ENCODE measurements at regions of chrX and their contacts with region 1.

Region 1: DNA sequence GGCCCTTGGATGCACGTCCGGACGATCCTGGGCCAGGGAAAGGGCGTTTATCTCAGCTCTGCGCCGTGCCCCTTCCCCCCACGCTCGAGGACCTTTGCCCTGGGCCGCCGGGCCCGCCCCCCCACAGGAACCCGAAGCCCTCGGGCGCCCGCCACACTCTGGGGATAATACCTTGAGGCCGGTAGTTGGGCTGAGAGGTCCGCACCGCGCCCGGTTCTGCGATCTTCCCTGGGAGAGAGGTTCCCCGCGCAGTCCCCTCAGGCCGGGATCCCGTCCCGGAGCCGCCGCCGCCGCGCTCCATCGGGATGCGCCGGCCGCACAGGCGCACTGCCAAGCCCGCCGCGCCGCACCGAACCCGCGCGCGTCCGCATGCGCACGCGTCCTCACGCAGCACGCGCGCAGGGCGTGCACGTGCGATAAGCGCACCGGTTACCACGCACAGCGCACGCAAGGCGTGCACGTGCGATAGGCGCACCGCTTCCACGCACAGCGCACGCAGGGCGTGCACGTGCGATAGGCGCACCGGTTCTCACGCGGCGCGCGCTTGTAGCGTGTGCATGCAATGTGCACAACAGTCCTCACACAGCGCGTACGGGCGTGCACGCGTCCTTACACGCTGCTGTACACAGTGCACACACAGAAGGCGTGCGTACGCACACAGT is at the start of gene MAP7D2:
- DNase-seq: no peak
- H3K4me3 ChIP-seq: peak within 1 kb of the TSS in 1 of 2 donors; percentile 29
- H3K27ac ChIP-seq: no peak within 1 kb of the TSS
- H3K4me1 ChIP-seq: peaks cover 0 to 14% (median 6%) of the 10 kb centered on the region in 4 donors
- H3K27me3 ChIP-seq: peaks cover 0 to 17% of the 10 kb centered on the region in 2 donors
- CTCF ChIP-seq: no peak

Region 2: GRCh38 chrX:19931146-19931545 is 185.6 kb before region 1 on chrX:
- intact Hi-C with region 1: loop called (anchors 10 kb)
- DNase-seq: no peak
- H3K4me3 ChIP-seq: no peak overlapping the region
- H3K27ac ChIP-seq: no peak overlapping the region
- H3K4me1 ChIP-seq: no peaks in the 10 kb centered on the region
- H3K27me3 ChIP-seq: no peaks in the 10 kb centered on the region
- CTCF ChIP-seq: no peak

Region 3: GRCh38 chrX:19987856-19988255 is 128.9 kb before region 1 on chrX:
- intact Hi-C with region 1: no loop called
- DNase-seq: no peak
- H3K4me3 ChIP-seq: no peak overlapping the region
- H3K27ac ChIP-seq: no peak overlapping the region
- H3K4me1 ChIP-seq: no peaks in the 10 kb centered on the region
- H3K27me3 ChIP-seq: no peaks in the 10 kb centered on the region
- CTCF ChIP-seq: no peak